Psoas muscle (tissue), 8 donors: ENCODE measurements at regions of chr2 and their contacts with region 1.

Region 1: DNA sequence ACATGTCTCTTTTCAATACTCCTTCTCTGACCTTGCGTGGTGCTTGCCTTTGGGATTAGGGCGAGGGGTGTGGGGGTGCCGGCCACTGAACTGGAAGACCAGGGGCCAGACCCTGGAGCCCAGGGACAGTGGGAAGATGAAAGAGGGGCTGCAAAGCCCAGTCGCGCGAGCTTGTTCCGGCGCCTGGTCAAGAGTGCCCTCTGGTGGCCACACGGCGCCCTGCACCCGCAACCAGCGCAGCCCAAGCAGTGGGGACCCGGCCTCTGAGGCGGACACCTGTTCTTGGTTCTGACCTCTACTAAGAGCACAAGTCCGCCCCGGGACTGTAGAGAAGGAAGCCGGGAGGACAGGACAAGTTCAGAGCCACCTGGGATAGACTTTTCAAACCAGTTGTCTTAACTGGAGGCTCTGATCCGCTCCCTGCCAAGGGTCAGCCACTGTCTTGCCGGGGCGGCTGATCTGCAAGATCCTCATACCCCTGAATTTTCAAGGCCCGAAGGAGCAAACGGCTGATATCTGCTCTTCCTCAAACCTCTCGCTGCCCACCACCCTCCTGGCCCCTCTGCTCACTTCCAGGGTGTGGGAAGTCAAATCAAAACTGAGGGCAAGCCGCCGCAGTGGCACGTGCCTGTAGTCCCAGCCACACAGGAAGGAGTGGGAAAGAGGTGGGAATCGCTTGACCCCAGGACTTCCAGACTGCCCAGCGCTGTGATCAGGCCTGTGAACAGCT is 14.9 kb upstream of the MSH6 start:
- DNase-seq: peak; percentile 57 to 83
- ATAC-seq: peak; percentile 86 to 96 (median 88)
- H3K4me3 ChIP-seq: peak overlapping the region; percentile 24
- H3K27ac ChIP-seq: no peak overlapping the region
- H3K4me1 ChIP-seq: no peaks in the 10 kb centered on the region
- H3K27me3 ChIP-seq: no peaks in the 10 kb centered on the region
- CTCF ChIP-seq: peak; percentile 99

Region 2: DNA sequence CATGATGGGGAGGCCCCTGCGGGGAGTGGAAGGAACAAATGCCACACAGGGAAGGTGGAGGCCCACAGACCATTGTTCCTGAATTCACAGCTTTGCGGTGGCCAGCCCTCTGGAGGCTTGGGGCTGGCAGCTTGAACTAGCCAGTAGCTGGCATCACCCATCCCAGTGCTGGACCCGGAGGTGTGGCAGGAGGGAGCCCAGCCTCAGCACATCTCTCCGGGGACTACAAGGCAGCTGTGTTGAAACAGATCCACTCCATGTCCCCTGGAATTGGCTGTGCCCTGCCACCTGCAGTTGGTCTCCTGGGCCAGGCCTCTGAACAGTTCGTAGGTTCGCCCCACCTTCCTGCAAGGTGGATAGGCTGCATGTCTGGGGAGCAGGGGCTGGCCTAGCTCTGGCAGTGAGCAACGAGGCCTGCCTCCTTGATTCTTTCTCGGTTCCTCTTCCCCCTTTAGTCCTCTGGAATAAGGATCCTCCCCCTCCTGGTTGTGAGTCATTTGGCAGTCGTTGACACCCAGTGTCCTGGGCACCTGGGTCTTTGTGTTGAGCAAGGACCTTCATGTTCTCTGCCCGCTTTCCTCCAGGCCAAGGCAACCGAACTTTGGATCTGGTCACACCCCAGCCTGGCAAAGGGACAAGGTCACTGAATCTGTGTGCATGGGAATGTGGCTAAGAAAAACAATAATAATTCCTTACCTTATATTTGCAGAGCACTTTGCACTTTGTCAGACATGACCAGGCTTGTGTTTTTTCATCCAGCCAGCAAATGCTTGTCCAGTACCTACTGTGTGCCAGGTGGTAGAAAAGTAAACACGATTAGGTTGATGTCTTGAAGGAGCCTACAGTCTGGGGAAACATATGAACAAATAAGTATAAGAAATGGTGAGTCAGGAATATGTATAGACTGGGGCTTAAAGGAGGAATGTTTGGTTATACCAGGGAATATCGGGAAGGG is 797.4 kb before region 1 on chr2:
- intact Hi-C with region 1: loop called in 1 of 2 experiments (anchors 10 kb)
- DNase-seq: peak; percentile 75 to 84
- ATAC-seq: peak; percentile 41 to 84 (median 78)
- H3K4me3 ChIP-seq: no peak overlapping the region
- H3K27ac ChIP-seq: peak overlapping the region; percentile 56
- H3K4me1 ChIP-seq: peaks cover 35% of the 10 kb centered on the region
- H3K27me3 ChIP-seq: no peaks in the 10 kb centered on the region
- CTCF ChIP-seq: no peak

Region 3: DNA sequence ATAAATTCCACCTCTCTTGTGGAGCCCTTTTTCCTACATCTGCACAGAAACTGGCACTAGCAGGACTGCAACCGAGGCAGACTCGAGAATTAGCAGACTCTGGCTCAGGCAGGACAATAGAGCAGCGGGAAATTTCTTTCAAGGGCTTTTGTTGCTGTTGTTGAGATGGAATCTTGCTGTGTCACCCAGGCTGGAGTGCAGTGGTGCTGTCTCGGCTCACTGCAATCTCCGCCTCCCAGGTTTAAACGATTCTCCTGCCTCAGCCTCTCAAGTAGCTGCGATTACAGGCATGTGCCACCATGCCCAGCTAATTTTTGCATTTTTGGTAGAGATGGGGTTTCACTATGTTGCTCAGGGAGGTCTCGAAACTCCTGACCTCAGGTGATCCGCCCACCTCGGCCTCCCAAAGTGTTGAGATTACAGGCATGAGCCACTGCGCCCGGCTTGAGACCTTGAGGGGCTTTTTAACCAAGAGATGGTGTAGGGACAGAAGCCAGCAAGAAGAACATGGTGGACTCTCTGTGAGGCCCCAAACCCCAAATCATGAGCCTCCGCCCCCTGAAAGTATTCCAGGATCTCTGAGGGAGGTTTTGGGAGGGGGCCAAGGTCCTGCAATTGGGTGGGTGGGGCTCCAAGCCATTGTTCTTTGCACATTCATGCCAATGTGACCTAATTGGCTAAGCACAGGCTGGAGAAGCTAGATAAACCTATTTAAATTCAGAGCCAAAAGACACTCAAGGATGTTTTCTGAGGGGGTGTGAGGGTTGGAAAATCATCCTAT is 433.5 kb before region 1 on chr2:
- intact Hi-C with region 1: loop called in 1 of 2 experiments (anchors 5 kb)
- DNase-seq: no peak
- ATAC-seq: peak in 3 of 4 donors; percentile 21 to 26 (median 23)
- H3K4me3 ChIP-seq: no peak overlapping the region
- H3K27ac ChIP-seq: no peak overlapping the region
- H3K4me1 ChIP-seq: no peaks in the 10 kb centered on the region
- H3K27me3 ChIP-seq: no peaks in the 10 kb centered on the region
- CTCF ChIP-seq: no peak

Region 4: GRCh38 chr2:47357483-47357882 is 410.6 kb before region 1 on chr2:
- intact Hi-C with region 1: no loop called
- DNase-seq: no peak
- ATAC-seq: no peak
- H3K4me3 ChIP-seq: no peak overlapping the region
- H3K27ac ChIP-seq: no peak overlapping the region
- H3K4me1 ChIP-seq: no peaks in the 10 kb centered on the region
- H3K27me3 ChIP-seq: no peaks in the 10 kb centered on the region
- CTCF ChIP-seq: no peak

Region 5: GRCh38 chr2:47437287-47437686 is 330.8 kb before region 1 on chr2:
- intact Hi-C with region 1: loop called (anchors 1 to 5 kb)
- DNase-seq: no peak
- ATAC-seq: peak in 3 of 4 donors; percentile 47 to 74 (median 48)
- H3K4me3 ChIP-seq: no peak overlapping the region
- H3K27ac ChIP-seq: no peak overlapping the region
- H3K4me1 ChIP-seq: no peaks in the 10 kb centered on the region
- H3K27me3 ChIP-seq: no peaks in the 10 kb centered on the region
- CTCF ChIP-seq: peak; percentile 59

Region 6: GRCh38 chr2:47888581-47889280 is 120.7 kb after region 1 on chr2:
- intact Hi-C with region 1: no loop called
- DNase-seq: no peak
- ATAC-seq: no peak
- H3K4me3 ChIP-seq: no peak overlapping the region
- H3K27ac ChIP-seq: no peak overlapping the region
- H3K4me1 ChIP-seq: peaks cover 30% of the 10 kb centered on the region
- H3K27me3 ChIP-seq: no peaks in the 10 kb centered on the region
- CTCF ChIP-seq: no peak

Region 7: GRCh38 chr2:47950340-47951301 is 182.6 kb after region 1 on chr2:
- intact Hi-C with region 1: no loop called
- DNase-seq: no peak
- ATAC-seq: no peak
- H3K4me3 ChIP-seq: no peak overlapping the region
- H3K27ac ChIP-seq: no peak overlapping the region
- H3K4me1 ChIP-seq: peaks cover 7% of the 10 kb centered on the region
- H3K27me3 ChIP-seq: no peaks in the 10 kb centered on the region
- CTCF ChIP-seq: no peak